OCI-LY7 (cell line): ENCODE measurements at regions of chr7 and their contacts with region 1.

Region 1: DNA sequence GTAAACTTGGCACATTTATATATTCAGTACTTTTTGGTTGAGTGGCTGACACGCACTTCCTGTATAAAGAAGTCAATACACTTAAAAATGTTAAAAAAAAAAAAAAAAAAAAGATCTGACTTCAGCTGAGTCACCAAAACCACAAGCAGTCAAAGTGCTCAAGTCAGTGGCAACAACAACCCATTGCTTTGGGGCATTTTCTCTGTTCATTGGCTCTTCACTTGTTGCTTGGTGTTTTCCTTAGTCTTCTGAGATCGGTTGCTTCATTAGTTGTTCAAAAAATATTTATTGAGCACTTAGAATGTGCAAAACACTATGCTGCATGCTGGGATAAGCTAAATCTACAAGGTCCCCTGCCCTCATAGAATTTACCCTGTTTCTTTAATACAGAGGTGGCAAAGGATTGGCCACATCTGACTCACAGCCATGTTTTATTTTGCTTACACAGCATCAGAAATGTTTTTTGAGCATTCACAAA is 63.7 kb downstream of the ZNRF2 start:
- DNase-seq: peak; percentile 58
- H3K4me3 ChIP-seq: peak overlapping the region; percentile 31
- H3K27ac ChIP-seq: peak overlapping the region; percentile 31
- H3K4me1 ChIP-seq: peaks cover 66% of the 10 kb centered on the region
- CTCF ChIP-seq: no peak

Region 2: DNA sequence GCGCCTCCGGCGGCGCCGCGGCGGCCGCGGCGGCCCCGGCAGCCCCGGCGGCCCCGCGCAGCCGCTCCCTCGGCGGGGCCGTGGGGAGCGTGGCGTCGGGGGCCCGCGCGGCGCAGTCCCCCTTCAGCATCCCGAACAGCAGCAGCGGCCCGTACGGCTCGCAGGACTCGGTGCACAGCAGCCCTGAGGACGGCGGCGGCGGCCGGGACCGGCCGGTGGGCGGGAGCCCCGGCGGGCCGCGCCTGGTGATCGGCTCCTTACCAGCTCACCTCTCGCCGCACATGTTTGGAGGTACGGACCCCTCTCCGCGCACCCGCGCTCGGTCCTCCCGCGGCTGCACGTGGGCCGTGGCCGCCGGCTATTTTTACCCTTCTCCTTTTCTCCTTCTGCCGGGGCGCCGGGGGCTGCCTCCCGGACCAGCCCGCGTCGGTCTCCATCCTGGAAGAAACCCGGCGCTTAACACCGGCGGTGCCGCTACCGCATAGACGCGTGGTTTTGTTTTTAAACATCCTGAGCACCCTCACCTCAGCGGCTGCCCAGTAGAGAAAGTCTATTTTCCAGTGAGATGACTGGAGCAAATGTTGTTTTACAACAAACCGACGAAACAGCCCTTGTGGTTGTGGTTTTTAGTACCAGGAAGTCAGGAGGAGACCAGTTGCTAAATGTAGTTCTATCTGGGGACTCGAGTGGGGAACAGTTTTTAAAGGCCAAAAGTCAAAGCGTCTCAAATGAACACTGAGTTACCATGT is 62.4 kb before region 1 on chr7:
- CTCF ChIA-PET with region 1: no interaction called
- POLR2A ChIA-PET with region 1: interaction called, 19 read pairs
- intact Hi-C with region 1: loop called (anchors 2 kb)
- DNase-seq: peak; percentile 79
- H3K4me3 ChIP-seq: peak overlapping the region; percentile 81
- H3K27ac ChIP-seq: peak overlapping the region; percentile 85
- H3K4me1 ChIP-seq: peaks cover 56% of the 10 kb centered on the region
- CTCF ChIP-seq: no peak

Region 3: DNA sequence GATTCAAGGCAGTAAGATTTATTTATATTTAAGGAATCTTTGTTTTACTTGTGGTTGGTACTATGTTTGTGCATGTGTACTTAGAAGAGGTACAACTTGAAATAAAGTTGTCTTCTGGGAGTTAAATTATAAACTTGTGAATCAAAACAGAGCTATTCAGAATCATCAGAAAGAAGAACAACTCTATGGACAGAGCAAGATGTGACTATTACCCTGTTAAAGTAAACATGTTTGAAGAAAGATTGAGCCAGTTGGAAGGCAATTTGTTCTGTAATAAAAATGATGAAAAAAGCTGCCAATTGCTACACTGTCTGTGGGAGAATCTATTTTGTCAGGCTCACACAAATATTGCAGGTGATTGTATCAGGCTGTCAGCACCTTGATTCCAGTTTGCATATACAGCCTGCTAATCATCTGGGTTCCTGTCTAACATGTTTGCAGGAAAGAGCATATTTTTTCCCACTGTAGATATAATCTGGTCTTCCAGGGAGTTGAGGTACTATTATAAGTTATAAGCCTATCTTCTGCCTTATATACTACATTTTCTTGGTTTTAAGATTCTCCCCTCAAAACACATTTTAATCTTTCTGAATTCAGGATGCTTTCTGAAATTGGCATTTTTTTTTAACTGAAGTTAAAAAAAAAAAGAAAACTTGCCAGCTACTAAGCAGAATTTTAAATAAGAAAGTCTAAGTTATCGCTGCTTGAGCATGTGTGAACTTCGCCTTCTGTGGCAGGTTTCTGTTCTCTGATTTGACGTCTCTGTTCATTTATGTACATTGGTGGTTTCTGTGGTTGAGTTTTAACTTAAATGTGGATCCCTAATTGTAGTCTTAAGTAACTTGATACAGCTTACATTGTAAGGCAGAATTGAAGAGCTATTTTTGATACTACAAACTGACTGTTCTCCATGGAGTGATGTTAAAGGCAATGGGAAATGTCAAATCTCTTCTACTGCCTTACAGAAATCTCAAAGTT is 17.7 kb before region 1 on chr7:
- CTCF ChIA-PET with region 1: no interaction called
- POLR2A ChIA-PET with region 1: interaction called, 16 read pairs
- intact Hi-C with region 1: no loop called
- DNase-seq: peak; percentile 71
- H3K4me3 ChIP-seq: peak overlapping the region; percentile 54
- H3K27ac ChIP-seq: peak overlapping the region; percentile 74
- H3K4me1 ChIP-seq: peaks cover 48% of the 10 kb centered on the region
- CTCF ChIP-seq: no peak